ENCODE measurements at regions of chr10 and their contacts with region 1.

Region 1: GRCh38 chr10:63217120-63217605 is 84.0 kb downstream of the NRBF2 start:
- DNase-seq: peak; percentile 37
- CTCF ChIP-seq: peak; percentile 51

Region 2: DNA sequence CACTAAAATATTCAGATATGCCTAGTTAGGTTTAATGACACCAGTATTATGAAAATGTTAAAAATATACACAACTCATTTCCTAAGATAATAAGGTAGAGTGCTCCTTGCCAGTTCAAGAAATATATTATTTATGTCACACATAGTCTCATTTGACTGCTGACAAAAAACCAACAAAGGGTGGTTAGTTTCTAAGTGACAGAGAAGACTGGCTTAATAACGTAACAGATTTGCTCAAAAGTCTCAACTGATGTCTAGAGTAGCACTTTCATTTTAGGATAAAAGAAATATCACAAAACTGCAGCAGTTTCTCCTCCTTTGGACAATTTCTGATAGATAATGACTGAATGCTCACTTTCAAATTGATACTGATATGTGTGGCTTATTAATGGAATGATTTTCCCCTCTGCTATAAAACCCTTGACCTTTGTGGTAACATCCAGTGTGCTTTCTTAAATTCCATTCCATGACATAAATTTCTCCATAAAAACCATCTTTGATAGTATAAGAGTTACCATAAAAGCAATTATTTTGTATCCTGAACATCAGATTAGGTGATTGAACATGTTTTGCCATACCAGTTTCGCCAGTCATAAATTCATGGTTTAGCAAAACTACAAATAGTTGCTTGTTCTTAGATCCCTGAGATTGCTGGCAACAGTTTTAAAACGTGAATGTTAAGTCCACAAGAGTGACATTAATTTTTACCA is 10.2 kb after region 1 on chr10:
- CTCF ChIA-PET with region 1: interaction called, 12 read pairs
- POLR2A ChIA-PET with region 1: no interaction called
- DNase-seq: peak; percentile 23
- CTCF ChIP-seq: no peak

Region 3: DNA sequence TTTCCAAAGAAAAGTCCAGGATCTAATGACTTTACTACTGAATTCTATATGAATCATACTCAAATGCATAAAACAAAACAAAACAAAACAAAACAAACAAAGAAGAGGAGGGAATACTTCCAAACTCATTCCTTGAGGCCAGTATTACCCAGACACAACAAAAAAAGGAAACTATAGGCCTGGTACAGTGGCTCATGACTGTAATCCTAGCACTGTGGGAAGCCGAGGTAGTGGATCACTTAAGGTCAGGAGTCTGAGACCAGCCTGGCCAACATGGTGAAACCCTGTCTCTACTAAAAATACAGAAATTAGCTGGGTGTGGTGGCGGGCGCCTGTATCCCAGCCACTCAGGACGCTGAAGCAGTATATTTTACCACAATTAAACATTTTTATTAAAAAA is 30.6 kb after region 1 on chr10:
- CTCF ChIA-PET with region 1: no interaction called
- POLR2A ChIA-PET with region 1: no interaction called
- DNase-seq: no peak
- CTCF ChIP-seq: no peak